Ascending aorta (tissue), 2 donors: ENCODE measurements at regions of chr2 and their contacts with region 1.

Region 1: GRCh38 chr2:221943076-221943810 is 355.6 kb downstream of the PAX3 start:
- DNase-seq: peak in 1 of 2 donors; percentile 85
- H3K4me3 ChIP-seq: no peak overlapping the region
- H3K27ac ChIP-seq: peak overlapping the region; percentile 44 to 74
- H3K4me1 ChIP-seq: peaks cover 0 to 14% of the 10 kb centered on the region in 2 donors
- H3K27me3 ChIP-seq: no peaks in the 10 kb centered on the region
- CTCF ChIP-seq: no peak

Region 2: DNA sequence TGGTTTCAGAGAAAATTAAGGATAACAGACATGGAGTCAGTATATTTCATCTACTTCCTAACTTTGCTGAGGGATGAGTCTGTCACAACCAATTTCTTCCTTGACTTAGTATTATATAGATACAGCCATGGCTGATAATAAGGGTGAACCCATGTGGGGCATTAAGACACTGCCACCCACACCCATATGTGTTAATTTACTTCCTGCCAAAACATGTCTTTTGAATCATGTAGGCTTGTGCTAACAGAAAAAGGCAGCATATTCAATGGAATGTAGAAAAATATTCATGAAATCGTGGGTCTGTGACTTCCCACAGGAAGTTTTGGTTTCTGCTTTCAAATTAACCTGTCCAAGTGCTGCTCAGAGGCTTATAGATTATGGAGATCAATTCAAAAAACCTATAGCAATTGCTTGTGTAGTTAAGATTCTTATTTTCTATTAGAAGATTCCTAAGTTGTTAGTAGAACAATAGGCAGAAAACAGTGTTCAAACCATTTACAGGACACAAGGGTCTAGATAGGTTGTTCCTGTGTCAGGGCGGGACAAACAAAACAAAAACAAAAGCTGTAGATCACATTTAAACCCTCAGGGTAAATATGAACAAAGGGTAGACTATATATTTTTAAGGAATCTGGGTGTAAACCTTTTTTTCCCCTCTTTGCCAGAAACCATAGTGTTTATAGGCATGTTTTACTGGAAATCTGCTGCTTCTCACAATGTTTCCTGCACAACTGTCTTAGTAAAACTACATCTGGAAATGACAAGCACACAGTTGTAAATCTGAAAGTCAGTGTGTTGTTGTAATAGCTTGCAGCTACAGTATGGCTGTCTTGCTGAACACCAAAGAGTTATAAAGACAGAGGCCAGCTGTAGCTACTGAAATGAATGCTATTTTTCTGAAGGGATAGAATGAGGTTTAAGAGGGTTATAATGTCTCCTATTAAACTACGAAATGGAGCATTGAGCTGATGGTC is 1062.3 kb before region 1 on chr2:
- intact Hi-C with region 1: no loop called
- DNase-seq: no peak
- H3K4me3 ChIP-seq: no peak overlapping the region
- H3K27ac ChIP-seq: no peak overlapping the region
- H3K4me1 ChIP-seq: no peaks in the 10 kb centered on the region
- H3K27me3 ChIP-seq: no peaks in the 10 kb centered on the region
- CTCF ChIP-seq: no peak

Region 3: DNA sequence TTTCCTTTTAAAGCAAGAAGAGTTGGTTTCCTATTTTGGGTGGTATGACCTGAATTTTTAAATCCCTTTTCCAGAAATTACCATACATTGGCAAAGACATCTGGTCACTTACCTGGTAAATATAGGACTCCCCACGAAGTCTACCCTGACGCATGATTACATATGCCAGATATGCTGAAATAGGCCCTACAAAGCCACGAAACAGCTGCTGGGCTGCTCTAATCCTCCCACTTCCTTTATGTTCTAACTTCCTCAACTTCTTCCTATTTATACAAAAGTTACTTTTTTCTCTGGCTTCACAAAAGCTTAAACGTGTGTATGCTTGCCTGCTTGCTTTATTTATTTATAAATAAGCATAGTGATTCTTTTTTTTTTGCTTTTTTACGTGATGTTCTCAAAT is 185.2 kb before region 1 on chr2:
- intact Hi-C with region 1: no loop called
- DNase-seq: no peak
- H3K4me3 ChIP-seq: no peak overlapping the region
- H3K27ac ChIP-seq: no peak overlapping the region
- H3K4me1 ChIP-seq: no peaks in the 10 kb centered on the region
- H3K27me3 ChIP-seq: no peaks in the 10 kb centered on the region
- CTCF ChIP-seq: no peak

Region 4: DNA sequence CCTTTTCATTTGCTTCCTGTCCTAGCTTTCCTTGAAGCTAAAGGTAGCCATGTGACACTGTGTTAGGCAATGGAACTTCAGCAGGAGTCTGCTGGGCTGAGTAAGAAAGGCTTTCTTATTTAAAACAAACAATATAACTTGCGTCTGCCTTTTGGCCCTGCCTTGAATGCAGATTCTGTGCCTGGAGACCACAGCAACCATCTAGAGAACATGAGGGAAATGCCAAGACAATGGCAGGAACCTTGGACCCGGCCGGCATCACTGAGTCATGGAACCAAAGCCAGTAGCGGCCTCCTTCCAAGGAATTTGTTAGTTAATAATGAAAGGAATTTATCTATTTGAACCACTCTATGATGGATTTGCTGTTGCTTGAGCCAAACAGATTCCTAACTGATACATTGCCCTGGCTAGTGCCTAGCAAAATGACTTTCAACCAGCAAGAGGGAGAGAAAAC is 163.6 kb before region 1 on chr2:
- intact Hi-C with region 1: loop called (anchors 2 kb)
- DNase-seq: peak in 1 of 2 donors; percentile 85
- H3K4me3 ChIP-seq: no peak overlapping the region
- H3K27ac ChIP-seq: peak overlapping the region; percentile 50 to 69
- H3K4me1 ChIP-seq: peaks cover under 1 to 7% of the 10 kb centered on the region in 2 donors
- H3K27me3 ChIP-seq: no peaks in the 10 kb centered on the region
- CTCF ChIP-seq: no peak

Region 5: GRCh38 chr2:221896505-221897151 is 46.6 kb before region 1 on chr2:
- intact Hi-C with region 1: loop called (anchors 5 kb)
- DNase-seq: peak in 1 of 2 donors; percentile 62
- H3K4me3 ChIP-seq: peak overlapping the region in 1 of 2 donors; percentile 27
- H3K27ac ChIP-seq: peak overlapping the region in 1 of 2 donors; percentile 33
- H3K4me1 ChIP-seq: no peaks in the 10 kb centered on the region
- H3K27me3 ChIP-seq: no peaks in the 10 kb centered on the region
- CTCF ChIP-seq: no peak